CD4-positive, alpha-beta T cell (primary cell): ENCODE measurements at regions of chr2 and their contacts with region 1.

Region 1: GRCh38 chr2:25276569-25277465 is 64.9 kb downstream of the DNMT3A start:
- DNase-seq: peak; percentile 56 to 87 (median 68)
- ATAC-seq: peak; percentile 25
- H3K4me3 ChIP-seq: peak overlapping the region; percentile 50
- H3K4me3 Mint-ChIP-seq: peak overlapping the region; percentile 73
- H3K27ac ChIP-seq: peak overlapping the region; percentile 88 to 95
- H3K27ac Mint-ChIP-seq: peak overlapping the region; percentile 97
- H3K4me1 ChIP-seq: peaks cover 90% of the 10 kb centered on the region
- H3K4me1 Mint-ChIP-seq: peaks cover 72% of the 10 kb centered on the region
- H3K27me3 ChIP-seq: no peaks in the 10 kb centered on the region
- H3K27me3 Mint-ChIP-seq: no peaks in the 10 kb centered on the region
- CTCF ChIP-seq: peak; percentile 86

Region 2: GRCh38 chr2:24551016-24551415 is 725.8 kb before region 1 on chr2:
- CTCF ChIA-PET with region 1: no interaction called
- POLR2A ChIA-PET with region 1: no interaction called
- intact Hi-C with region 1: no loop called
- DNase-seq: no peak
- ATAC-seq: no peak
- H3K4me3 ChIP-seq: no peak overlapping the region
- H3K4me3 Mint-ChIP-seq: no peak overlapping the region
- H3K27ac ChIP-seq: no peak overlapping the region
- H3K27ac Mint-ChIP-seq: no peak overlapping the region
- H3K4me1 ChIP-seq: no peaks in the 10 kb centered on the region
- H3K4me1 Mint-ChIP-seq: peaks cover 27% of the 10 kb centered on the region
- H3K27me3 ChIP-seq: no peaks in the 10 kb centered on the region
- H3K27me3 Mint-ChIP-seq: no peaks in the 10 kb centered on the region
- CTCF ChIP-seq: no peak

Region 3: GRCh38 chr2:25215948-25216679 is 60.7 kb before region 1 on chr2:
- CTCF ChIA-PET with region 1: no interaction called
- POLR2A ChIA-PET with region 1: interaction called, 17 read pairs
- intact Hi-C with region 1: loop called in 1 of 2 experiments (anchors 5 kb)
- DNase-seq: peak; percentile 62 to 92 (median 86)
- ATAC-seq: peak; percentile 90
- H3K4me3 ChIP-seq: peak overlapping the region; percentile 70
- H3K4me3 Mint-ChIP-seq: peak overlapping the region; percentile 87
- H3K27ac ChIP-seq: peak overlapping the region; percentile 52 to 76
- H3K27ac Mint-ChIP-seq: peak overlapping the region; percentile 85
- H3K4me1 ChIP-seq: peaks cover 21% of the 10 kb centered on the region
- H3K4me1 Mint-ChIP-seq: peaks cover 18% of the 10 kb centered on the region
- H3K27me3 ChIP-seq: no peaks in the 10 kb centered on the region
- H3K27me3 Mint-ChIP-seq: no peaks in the 10 kb centered on the region
- CTCF ChIP-seq: no peak

Region 4: DNA sequence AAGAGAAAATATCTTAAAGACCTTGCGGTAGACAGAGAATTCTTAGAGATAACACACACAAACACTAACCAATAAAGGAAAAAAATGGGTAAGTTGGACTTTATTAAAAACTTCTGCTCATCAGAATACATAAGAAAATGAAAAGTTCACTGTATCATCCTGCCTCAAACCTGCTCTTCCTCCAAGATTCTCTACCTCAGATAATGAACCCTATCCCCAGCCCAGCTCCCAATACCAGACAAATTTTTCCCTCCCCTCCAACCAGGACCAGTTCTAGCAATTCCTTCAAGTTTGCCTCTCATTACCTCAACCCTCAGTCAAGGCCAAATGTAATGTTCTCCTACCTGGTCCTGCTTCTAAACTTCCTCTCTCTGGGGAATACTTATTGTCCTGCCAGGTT is 14.5 kb before region 1 on chr2:
- CTCF ChIA-PET with region 1: interaction called, 6 read pairs
- POLR2A ChIA-PET with region 1: interaction called, 10 read pairs
- intact Hi-C with region 1: no loop called
- DNase-seq: no peak
- ATAC-seq: no peak
- H3K4me3 ChIP-seq: no peak overlapping the region
- H3K4me3 Mint-ChIP-seq: no peak overlapping the region
- H3K27ac ChIP-seq: no peak overlapping the region
- H3K27ac Mint-ChIP-seq: peak overlapping the region; percentile 70
- H3K4me1 ChIP-seq: peaks cover 30% of the 10 kb centered on the region
- H3K4me1 Mint-ChIP-seq: peaks cover 30% of the 10 kb centered on the region
- H3K27me3 ChIP-seq: no peaks in the 10 kb centered on the region
- H3K27me3 Mint-ChIP-seq: no peaks in the 10 kb centered on the region
- CTCF ChIP-seq: no peak

Region 5: GRCh38 chr2:25309402-25309801 is 32.6 kb after region 1 on chr2:
- CTCF ChIA-PET with region 1: interaction called, 8 read pairs
- POLR2A ChIA-PET with region 1: interaction called, 25 read pairs
- intact Hi-C with region 1: loop called in 1 of 2 experiments (anchors 5 kb)
- DNase-seq: peak; percentile 49 to 81 (median 60)
- ATAC-seq: peak; percentile 59
- H3K4me3 ChIP-seq: no peak overlapping the region
- H3K4me3 Mint-ChIP-seq: peak overlapping the region; percentile 25
- H3K27ac ChIP-seq: no peak overlapping the region
- H3K27ac Mint-ChIP-seq: peak overlapping the region; percentile 88
- H3K4me1 ChIP-seq: peaks cover 96% of the 10 kb centered on the region
- H3K4me1 Mint-ChIP-seq: peaks cover 87% of the 10 kb centered on the region
- H3K27me3 ChIP-seq: no peaks in the 10 kb centered on the region
- H3K27me3 Mint-ChIP-seq: no peaks in the 10 kb centered on the region
- CTCF ChIP-seq: peak; percentile 66

Region 6: DNA sequence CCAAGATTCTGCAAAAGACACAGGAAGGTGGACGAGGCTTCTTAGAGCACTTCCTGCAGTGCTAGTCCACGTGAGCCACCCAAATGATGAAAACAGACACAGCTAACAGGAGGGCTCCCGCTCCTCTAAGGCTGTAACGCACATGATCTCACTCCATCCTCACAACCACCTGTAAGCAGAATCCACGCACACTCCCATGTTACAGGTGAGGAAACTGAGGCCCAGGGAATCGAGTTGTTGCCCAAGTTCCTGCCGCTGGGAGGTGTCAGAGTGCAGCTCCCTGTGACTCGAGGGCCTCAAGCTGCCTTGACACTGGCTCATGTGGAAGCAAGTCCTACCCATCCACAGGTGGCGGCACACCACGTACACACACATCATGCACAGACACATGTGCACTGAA is 60.5 kb after region 1 on chr2:
- CTCF ChIA-PET with region 1: interaction called, 3 read pairs
- POLR2A ChIA-PET with region 1: interaction called, 23 read pairs
- intact Hi-C with region 1: loop called (anchors 2 to 10 kb)
- DNase-seq: peak in 3 of 14 experiments; percentile 39 to 55 (median 45)
- ATAC-seq: peak; percentile 18
- H3K4me3 ChIP-seq: no peak overlapping the region
- H3K4me3 Mint-ChIP-seq: peak overlapping the region; percentile 21
- H3K27ac ChIP-seq: peak overlapping the region in 1 of 2 donors; percentile 8
- H3K27ac Mint-ChIP-seq: peak overlapping the region; percentile 77
- H3K4me1 ChIP-seq: peaks cover 79% of the 10 kb centered on the region
- H3K4me1 Mint-ChIP-seq: peaks cover 71% of the 10 kb centered on the region
- H3K27me3 ChIP-seq: no peaks in the 10 kb centered on the region
- H3K27me3 Mint-ChIP-seq: no peaks in the 10 kb centered on the region
- CTCF ChIP-seq: no peak

Region 7: GRCh38 chr2:25362049-25362433 is 85.2 kb after region 1 on chr2:
- CTCF ChIA-PET with region 1: interaction called, 14 read pairs
- POLR2A ChIA-PET with region 1: interaction called, 25 read pairs
- intact Hi-C with region 1: no loop called
- DNase-seq: peak; percentile 88 to 98 (median 94)
- ATAC-seq: peak; percentile 96
- H3K4me3 ChIP-seq: peak overlapping the region; percentile 61
- H3K4me3 Mint-ChIP-seq: peak overlapping the region; percentile 90
- H3K27ac ChIP-seq: peak overlapping the region; percentile 67 to 80
- H3K27ac Mint-ChIP-seq: peak overlapping the region; percentile 84
- H3K4me1 ChIP-seq: peaks cover 21% of the 10 kb centered on the region
- H3K4me1 Mint-ChIP-seq: peaks cover 25% of the 10 kb centered on the region
- H3K27me3 ChIP-seq: no peaks in the 10 kb centered on the region
- H3K27me3 Mint-ChIP-seq: no peaks in the 10 kb centered on the region
- CTCF ChIP-seq: peak; percentile 94